K562 (cell line): ENCODE measurements at regions of chr2 and their contacts with region 1.

Region 1: DNA sequence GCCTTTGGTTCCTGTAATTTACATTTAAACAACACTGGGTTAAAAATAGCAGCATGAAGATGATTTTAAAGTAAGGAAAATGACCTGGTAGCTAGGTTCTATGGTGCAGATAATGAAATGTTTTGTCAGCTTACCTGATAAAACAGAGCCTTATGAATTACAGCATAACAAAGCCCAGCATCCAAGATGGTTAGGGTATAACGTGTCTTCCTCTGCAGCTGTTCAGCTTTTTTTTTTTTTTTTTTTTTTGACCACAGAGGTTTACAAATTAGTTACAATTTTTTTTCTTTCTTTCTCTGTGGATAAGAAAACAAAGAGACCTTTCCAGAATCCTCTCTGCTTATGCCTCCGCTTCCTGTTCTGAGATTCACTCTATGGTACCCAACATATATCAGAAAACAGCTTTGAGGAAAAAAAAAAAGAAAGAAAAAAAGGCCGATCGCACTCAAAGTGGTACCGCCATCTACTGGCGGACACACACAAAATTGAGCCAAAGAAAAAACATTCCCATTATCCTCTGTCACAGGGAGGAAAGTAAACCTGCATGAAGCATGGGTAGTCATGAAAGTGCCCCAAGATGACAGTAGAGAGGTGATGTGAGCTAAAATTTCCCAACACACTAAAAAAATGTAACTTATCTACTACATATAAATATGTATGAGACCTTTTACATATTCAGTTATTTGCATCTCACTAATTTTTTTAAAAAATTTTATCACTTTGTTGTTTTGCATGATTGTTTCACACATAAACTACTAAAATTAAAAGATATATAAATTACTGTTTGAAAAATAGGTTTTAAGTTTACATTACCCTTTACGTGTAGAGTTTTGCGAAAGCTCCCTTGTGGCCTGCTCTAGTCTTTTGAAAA is at the start of gene SCN3A:
- DNase-seq: peak; percentile 8 to 33 (median 14)
- ATAC-seq: no peak
- H3K4me3 ChIP-seq: no peak within 1 kb of the TSS
- H3K27ac ChIP-seq: no peak within 1 kb of the TSS
- H3K4me1 ChIP-seq: no peaks in the 10 kb centered on the region
- H3K27me3 ChIP-seq: no peaks in the 10 kb centered on the region
- CTCF ChIP-seq: peak; percentile 29 to 54 (median 45); a peak in 5 of 6 replicates
- EP300 ChIP-seq: no peak
- POLR2A ChIP-seq: no peak
- RAD21 ChIP-seq: peak; percentile 38 to 43; a peak in 2 of 4 replicates
- polyA plus RNA-seq, gene SCN3A: not detected

Region 2: GRCh38 chr2:164737612-164738081 is 466.3 kb before region 1 on chr2:
- CTCF ChIA-PET with region 1: no interaction called
- POLR2A ChIA-PET with region 1: no interaction called
- in situ Hi-C with region 1: no loop called
- intact Hi-C with region 1: loop called (anchors 2 kb)
- DNase-seq: peak; percentile 17 to 46 (median 26)
- ATAC-seq: peak; percentile 67
- H3K4me3 ChIP-seq: no peak overlapping the region
- H3K27ac ChIP-seq: no peak overlapping the region
- H3K4me1 ChIP-seq: no peaks in the 10 kb centered on the region
- H3K27me3 ChIP-seq: no peaks in the 10 kb centered on the region
- CTCF ChIP-seq: peak; percentile 36 to 63 (median 47)
- EP300 ChIP-seq: no peak
- POLR2A ChIP-seq: no peak
- RAD21 ChIP-seq: peak; percentile 38 to 53; a peak in 3 of 4 replicates

Region 3: DNA sequence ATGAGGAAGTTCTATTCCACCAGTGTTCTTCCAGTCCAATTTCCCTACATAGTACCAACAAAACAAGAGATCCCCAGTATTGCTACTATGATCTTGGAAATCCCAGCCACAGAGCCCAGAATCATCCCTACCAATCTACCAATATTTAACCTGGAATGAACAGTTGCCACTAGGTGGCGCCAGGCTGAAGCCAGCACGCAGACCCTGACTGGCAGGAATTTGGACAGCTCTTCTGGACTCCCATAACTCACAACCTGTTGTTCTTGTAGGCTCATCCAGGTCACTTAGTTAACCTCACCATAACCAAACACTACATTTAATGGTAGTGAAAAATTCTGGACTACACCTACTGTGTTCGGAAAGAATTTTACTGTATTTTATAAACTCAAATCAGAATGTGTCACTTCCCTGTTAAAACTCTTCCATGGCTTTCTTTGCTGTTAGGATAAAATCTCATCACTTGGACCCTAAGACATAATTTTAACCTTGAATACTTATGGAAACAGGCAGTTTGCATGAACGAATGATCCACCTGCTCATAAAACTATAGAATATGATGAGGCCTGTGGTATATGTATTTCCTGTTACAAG is 188.8 kb before region 1 on chr2:
- CTCF ChIA-PET with region 1: no interaction called
- POLR2A ChIA-PET with region 1: no interaction called
- in situ Hi-C with region 1: no loop called
- intact Hi-C with region 1: loop called (anchors 5 kb)
- DNase-seq: peak; percentile 39 to 70 (median 55)
- ATAC-seq: peak; percentile 89
- H3K4me3 ChIP-seq: no peak overlapping the region
- H3K27ac ChIP-seq: no peak overlapping the region
- H3K4me1 ChIP-seq: no peaks in the 10 kb centered on the region
- H3K27me3 ChIP-seq: no peaks in the 10 kb centered on the region
- CTCF ChIP-seq: peak; percentile 60 to 79 (median 69)
- EP300 ChIP-seq: no peak
- POLR2A ChIP-seq: no peak
- RAD21 ChIP-seq: peak; percentile 55 to 58

Region 4: DNA sequence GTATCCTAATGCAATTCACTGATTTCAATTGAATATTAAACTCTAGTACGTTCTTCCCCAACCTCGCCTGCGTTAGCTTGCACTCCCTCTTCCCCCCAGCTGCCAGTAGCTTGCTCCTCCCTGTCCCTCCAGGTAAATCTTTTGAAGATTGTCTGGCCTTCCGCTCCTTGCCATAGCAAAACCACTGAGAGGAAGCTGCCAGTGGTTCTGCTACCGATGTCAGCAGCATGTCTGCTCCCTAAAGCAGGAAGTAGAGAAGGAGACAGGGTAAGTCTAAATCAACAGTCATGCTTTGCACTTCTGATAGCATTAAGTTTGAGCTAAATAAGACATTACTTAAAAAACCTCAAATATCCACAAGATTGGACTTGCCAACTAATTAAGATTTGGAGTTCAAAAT is 124.3 kb after region 1 on chr2:
- CTCF ChIA-PET with region 1: no interaction called
- POLR2A ChIA-PET with region 1: no interaction called
- in situ Hi-C with region 1: no loop called
- intact Hi-C with region 1: no loop called
- DNase-seq: no peak
- ATAC-seq: no peak
- H3K4me3 ChIP-seq: no peak overlapping the region
- H3K27ac ChIP-seq: no peak overlapping the region
- H3K4me1 ChIP-seq: no peaks in the 10 kb centered on the region
- H3K27me3 ChIP-seq: no peaks in the 10 kb centered on the region
- CTCF ChIP-seq: no peak
- EP300 ChIP-seq: no peak
- POLR2A ChIP-seq: no peak
- RAD21 ChIP-seq: no peak